ENCODE measurements at regions of chr9 and their contacts with region 1.

Region 1: GRCh38 chr9:35732122-35732799 is at the starts of genes CREB3 and TLN1:
- DNase-seq: peak; percentile 98
- ATAC-seq: peak; percentile 86
- H3K4me3 Mint-ChIP-seq: no peak within 1 kb of the TSS
- H3K27ac Mint-ChIP-seq: peak within 1 kb of the TSS; percentile 96
- H3K4me1 Mint-ChIP-seq: peaks cover 23% of the 10 kb centered on the region
- H3K27me3 Mint-ChIP-seq: no peaks in the 10 kb centered on the region
- CTCF ChIP-seq: no peak
- total RNA-seq, gene CREB3: 22.3 to 22.4 TPM
- total RNA-seq, gene TLN1: 212 to 219 TPM

Region 2: GRCh38 chr9:35611230-35611797 is 120.9 kb before region 1 on chr9:
- CTCF ChIA-PET with region 1: interaction called, 26 read pairs
- POLR2A ChIA-PET with region 1: interaction called, 3 read pairs
- intact Hi-C with region 1: no loop called
- DNase-seq: peak; percentile 77
- ATAC-seq: peak; percentile 94
- H3K4me3 Mint-ChIP-seq: no peak overlapping the region
- H3K27ac Mint-ChIP-seq: no peak overlapping the region
- H3K4me1 Mint-ChIP-seq: peaks cover 16% of the 10 kb centered on the region
- H3K27me3 Mint-ChIP-seq: no peaks in the 10 kb centered on the region
- CTCF ChIP-seq: peak; percentile 79

Region 3: DNA sequence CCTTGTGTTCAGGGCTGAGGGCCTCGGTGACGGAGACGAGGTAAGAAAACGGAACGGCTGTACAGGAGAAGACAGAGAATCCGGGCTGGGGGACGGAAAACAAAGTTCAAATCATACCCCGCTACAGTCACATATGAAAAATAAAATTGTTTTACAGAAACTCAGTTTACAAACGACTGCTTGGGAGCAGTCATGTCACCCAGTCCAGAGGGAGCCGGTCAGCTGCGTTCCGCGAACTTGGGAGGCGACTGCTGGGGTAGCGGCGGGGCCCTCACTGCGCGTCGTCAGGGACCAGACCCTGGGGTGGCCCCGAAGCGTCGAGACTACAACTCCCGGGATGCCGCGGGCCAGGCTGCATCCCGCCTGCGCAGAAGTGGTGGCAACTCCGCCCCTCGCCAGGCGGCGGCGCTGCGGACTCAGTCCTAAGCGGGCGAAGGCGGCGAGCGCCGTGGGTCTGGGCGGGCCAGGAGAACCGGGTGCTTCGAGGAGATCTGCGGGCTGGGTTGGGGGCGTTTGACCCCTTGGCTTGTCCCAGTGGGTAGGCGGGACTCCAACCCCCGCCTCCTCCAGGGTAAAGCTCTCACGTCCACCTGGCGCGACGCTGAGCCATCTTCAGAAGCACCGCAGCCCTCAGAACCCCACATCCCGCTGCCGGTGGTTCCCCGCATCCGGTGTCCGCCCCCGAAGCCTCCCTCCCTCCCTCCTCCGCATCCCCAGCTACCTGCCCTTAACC is 85.6 kb before region 1 on chr9:
- CTCF ChIA-PET with region 1: interaction called, 21 read pairs
- POLR2A ChIA-PET with region 1: interaction called, 3 read pairs
- intact Hi-C with region 1: no loop called
- DNase-seq: peak; percentile 94
- ATAC-seq: peak; percentile 84
- H3K4me3 Mint-ChIP-seq: peak overlapping the region; percentile 85
- H3K27ac Mint-ChIP-seq: peak overlapping the region; percentile 79
- H3K4me1 Mint-ChIP-seq: peaks cover 44% of the 10 kb centered on the region
- H3K27me3 Mint-ChIP-seq: no peaks in the 10 kb centered on the region
- CTCF ChIP-seq: peak; percentile 83

Region 4: GRCh38 chr9:35664531-35665470 is 67.5 kb before region 1 on chr9 and contains the start of gene ARHGEF39:
- CTCF ChIA-PET with region 1: interaction called, 21 read pairs
- POLR2A ChIA-PET with region 1: interaction called, 5 read pairs
- intact Hi-C with region 1: no loop called
- DNase-seq: peak; percentile 80
- ATAC-seq: peak; percentile 89
- H3K4me3 Mint-ChIP-seq: peak within 1 kb of the TSS; percentile 84
- H3K27ac Mint-ChIP-seq: peak within 1 kb of the TSS; percentile 63
- H3K4me1 Mint-ChIP-seq: peaks cover 40% of the 10 kb centered on the region
- H3K27me3 Mint-ChIP-seq: no peaks in the 10 kb centered on the region
- CTCF ChIP-seq: no peak
- total RNA-seq, gene ARHGEF39: 16.0 to 19.9 TPM

Region 5: GRCh38 chr9:35748858-35749514 is 16.7 kb after region 1 on chr9 and contains the starts of genes GBA2 and RGP1:
- CTCF ChIA-PET with region 1: interaction called, 51 read pairs
- POLR2A ChIA-PET with region 1: interaction called, 16 read pairs
- intact Hi-C with region 1: no loop called
- DNase-seq: peak; percentile 76
- ATAC-seq: peak; percentile 85
- H3K4me3 Mint-ChIP-seq: peak within 1 kb of the TSS; percentile 94
- H3K27ac Mint-ChIP-seq: peak within 1 kb of the TSS; percentile 88
- H3K4me1 Mint-ChIP-seq: peaks cover 32% of the 10 kb centered on the region
- H3K27me3 Mint-ChIP-seq: no peaks in the 10 kb centered on the region
- CTCF ChIP-seq: no peak
- total RNA-seq, gene GBA2: 21.2 to 22.3 TPM
- total RNA-seq, gene RGP1: 13.0 to 14.8 TPM

Region 6: GRCh38 chr9:35783418-35783817 is 51.2 kb after region 1 on chr9:
- CTCF ChIA-PET with region 1: no interaction called
- POLR2A ChIA-PET with region 1: no interaction called
- intact Hi-C with region 1: no loop called
- DNase-seq: no peak
- ATAC-seq: no peak
- H3K4me3 Mint-ChIP-seq: no peak overlapping the region
- H3K27ac Mint-ChIP-seq: no peak overlapping the region
- H3K4me1 Mint-ChIP-seq: peaks cover 3% of the 10 kb centered on the region
- H3K27me3 Mint-ChIP-seq: no peaks in the 10 kb centered on the region
- CTCF ChIP-seq: no peak

Region 7: DNA sequence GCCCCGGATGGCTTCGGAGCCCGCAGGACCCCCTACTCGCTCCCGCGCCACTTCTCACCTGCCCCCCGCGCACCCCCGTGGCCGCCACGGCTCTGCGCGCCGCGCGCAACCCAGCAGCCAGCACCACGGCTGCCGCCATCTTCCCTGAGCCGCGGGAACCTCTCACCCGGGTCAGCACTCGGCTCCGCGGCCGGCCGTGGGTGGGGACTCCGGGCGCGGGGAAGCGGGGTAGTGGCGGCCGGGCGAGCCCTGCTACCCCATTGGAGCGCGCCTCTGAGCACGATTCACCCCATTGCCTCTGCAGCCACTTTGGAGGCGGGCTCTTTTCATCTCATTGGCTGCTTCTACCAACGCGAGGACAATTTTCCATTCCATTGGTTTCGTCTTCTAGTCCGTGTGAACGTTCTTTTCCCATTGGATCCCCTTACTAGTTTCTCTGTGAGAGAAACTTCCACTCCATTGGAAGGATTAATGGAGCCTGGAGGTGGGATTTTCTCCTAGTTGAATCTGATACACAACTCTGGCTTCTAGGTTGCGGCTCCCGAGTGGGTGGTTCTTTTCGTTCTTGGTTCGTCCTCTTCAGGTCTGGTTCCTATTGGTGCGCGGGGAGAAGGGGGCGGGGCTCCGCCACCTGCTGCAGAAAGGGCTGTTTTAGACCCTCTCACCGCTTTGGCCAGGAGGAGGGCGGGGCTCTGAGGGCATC is 82.7 kb after region 1 on chr9 and contains the start of gene HINT2:
- CTCF ChIA-PET with region 1: interaction called, 7 read pairs
- POLR2A ChIA-PET with region 1: interaction called, 3 read pairs
- intact Hi-C with region 1: loop called (anchors 5 kb)
- DNase-seq: peak; percentile 100
- ATAC-seq: peak; percentile 85
- H3K4me3 Mint-ChIP-seq: peak within 1 kb of the TSS; percentile 92
- H3K27ac Mint-ChIP-seq: peak within 1 kb of the TSS; percentile 97
- H3K4me1 Mint-ChIP-seq: peaks cover 34% of the 10 kb centered on the region
- H3K27me3 Mint-ChIP-seq: no peaks in the 10 kb centered on the region
- CTCF ChIP-seq: no peak
- total RNA-seq, gene HINT2: 53.4 to 62.7 TPM

Measured in activated CD8-positive, alpha-beta T cell treated with anti-CD3 and anti-CD28 coated beads for 36 hours (primary cell).